ENCODE measurements at regions of chr14 and their contacts with region 1.

Region 1: DNA sequence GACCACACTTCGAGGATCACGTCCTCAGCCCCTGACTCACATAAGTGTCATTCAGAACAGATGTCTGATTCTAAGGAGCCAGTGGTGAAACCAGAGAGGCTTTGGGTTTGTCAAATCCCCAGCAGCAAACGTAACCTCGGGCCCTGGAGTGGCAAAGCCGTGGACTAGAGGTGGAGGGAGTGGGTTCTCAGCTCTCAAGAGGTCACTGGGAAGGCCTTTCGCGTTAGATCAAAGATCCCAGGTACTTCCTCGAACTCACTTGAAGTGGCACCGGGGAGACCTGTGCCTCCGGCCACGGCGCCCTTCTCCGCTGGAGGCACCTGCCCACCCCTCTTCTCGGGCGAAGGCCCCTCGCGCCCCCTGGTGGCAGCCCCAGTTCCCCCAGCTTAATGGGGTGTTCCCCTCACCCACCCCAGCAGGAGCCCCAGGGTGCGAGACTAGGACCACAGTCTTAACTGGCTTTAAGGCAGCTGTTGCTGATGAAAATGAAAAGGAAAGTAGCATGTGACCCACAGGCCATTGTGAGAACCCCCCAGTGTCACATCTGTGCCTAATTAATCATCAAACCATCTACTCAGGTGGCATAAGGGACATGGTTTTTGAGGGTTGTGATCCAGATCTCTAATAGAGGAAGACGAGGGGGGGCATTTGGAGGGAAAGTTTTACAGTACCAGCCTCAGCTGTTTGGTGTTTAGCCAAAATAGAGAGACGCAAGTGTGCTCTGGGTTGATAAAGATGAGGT is 672 bp upstream of the ESR2 start:
- DNase-seq: peak; percentile 95
- H3K4me3 Mint-ChIP-seq: peak overlapping the region; percentile 79
- H3K27ac Mint-ChIP-seq: no peak overlapping the region
- H3K4me1 Mint-ChIP-seq: peaks cover 29% of the 10 kb centered on the region
- H3K27me3 Mint-ChIP-seq: peaks cover 39% of the 10 kb centered on the region

Region 2: GRCh38 chr14:64074961-64075612 is 219.8 kb before region 1 on chr14:
- intact Hi-C with region 1: loop called (anchors 10 kb)
- DNase-seq: no peak
- H3K4me3 Mint-ChIP-seq: no peak overlapping the region
- H3K27ac Mint-ChIP-seq: peak overlapping the region; percentile 17
- H3K4me1 Mint-ChIP-seq: peaks cover 7% of the 10 kb centered on the region
- H3K27me3 Mint-ChIP-seq: no peaks in the 10 kb centered on the region

Region 3: DNA sequence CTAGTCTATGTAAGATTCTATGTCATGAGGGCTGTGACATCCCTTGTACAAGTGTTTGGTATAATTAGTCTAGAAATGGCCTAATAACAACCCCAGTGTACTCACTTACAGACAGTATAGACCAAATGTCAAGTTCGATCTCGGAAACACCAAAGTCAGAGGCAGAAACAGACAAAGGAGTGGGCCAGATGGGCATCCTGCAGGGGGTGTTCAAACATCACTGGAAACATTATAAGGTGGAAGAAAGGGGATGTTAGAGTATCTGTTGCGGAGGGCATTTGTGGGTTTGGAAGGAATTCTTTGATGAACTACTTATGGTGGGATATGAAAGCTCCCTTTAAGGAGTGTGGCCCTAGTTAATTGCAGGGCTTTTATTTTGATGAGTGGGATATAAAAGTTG is 135.3 kb before region 1 on chr14:
- intact Hi-C with region 1: loop called (anchors 5 kb)
- DNase-seq: no peak
- H3K4me3 Mint-ChIP-seq: no peak overlapping the region
- H3K27ac Mint-ChIP-seq: no peak overlapping the region
- H3K4me1 Mint-ChIP-seq: no peaks in the 10 kb centered on the region
- H3K27me3 Mint-ChIP-seq: no peaks in the 10 kb centered on the region

Region 4: DNA sequence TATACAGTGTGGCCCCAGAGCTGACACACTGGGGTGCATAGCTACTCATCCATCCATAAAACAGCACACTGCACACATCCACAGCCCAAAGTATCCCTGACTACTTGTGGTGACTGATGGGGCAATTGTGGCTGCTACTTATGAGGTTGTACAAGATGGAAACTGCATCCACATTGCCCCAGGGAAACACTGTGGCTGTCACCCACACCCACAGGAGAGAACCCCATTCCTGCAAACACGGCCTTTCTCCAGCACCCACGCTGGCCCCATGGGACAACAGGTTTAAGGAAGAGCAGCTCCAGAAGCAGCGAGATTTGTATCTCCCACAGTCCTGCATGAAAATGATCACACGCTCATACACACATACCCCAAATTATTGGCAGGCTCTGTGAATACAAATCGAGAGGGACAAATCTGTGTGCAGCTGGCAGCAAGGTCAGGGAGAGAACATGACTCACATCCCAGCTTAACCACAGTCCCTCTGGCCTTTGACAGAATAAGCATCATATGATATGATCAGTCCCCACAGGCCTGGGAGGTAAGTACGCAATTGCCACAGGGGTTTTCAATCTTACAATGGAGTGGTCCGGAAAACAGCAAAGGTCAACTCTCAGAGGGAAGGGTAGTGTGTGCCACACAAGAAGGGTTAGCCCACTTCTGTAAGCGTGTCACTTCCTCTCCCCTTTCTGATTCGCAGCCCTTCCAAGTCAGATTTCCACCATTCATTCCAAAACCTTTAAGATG is 62.6 kb before region 1 on chr14:
- intact Hi-C with region 1: loop called (anchors 2 kb)
- DNase-seq: peak; percentile 61
- H3K4me3 Mint-ChIP-seq: no peak overlapping the region
- H3K27ac Mint-ChIP-seq: peak overlapping the region; percentile 82
- H3K4me1 Mint-ChIP-seq: peaks cover 8% of the 10 kb centered on the region
- H3K27me3 Mint-ChIP-seq: peaks cover under 1% of the 10 kb centered on the region

Measured in activated CD4-positive, alpha-beta T cell treated with anti-CD3 and anti-CD28 coated beads, Interleukin-2, amount 10 ng/mL, durations not matched to agents 24 days and 14 days (primary cell).